ENCODE measurements at regions of chr11 and their contacts with region 1.

Region 1: DNA sequence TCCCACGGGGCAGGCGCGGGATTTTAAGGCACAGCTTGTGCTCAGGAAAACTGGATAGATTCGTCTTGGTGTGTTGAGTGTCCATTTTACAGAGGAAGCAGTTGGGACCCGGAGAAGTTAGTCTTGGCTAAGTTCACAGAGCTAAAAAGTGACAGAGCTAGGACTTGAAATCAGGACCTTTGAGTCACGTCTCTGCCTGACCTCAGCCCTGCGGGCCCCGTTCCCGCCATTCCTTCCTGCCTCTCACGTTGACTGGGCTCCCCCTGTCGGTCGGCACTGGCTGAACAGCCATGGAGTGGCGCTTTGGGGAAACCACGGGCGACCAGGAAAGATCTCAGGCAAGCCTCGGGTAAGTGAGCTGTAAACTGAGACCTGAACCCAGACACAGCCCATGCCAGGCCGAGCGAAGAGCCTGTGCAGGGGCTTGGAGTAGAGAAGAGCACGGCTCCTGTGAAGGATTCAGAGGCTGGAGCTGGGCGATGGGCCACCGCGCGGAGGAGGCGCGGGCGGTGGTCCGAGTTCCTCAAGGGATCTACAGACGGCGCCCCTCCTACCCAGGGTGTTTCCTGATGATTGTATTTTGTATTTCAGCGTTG is 54.1 kb downstream of the WNT11 start:
- DNase-seq: peak; percentile 93
- ATAC-seq: peak; percentile 96
- H3K4me3 ChIP-seq: peak overlapping the region; percentile 41
- H3K27ac ChIP-seq: no peak overlapping the region
- H3K4me1 ChIP-seq: peaks cover 12% of the 10 kb centered on the region
- H3K27me3 ChIP-seq: no peaks in the 10 kb centered on the region
- CTCF ChIP-seq: peak; percentile 92

Region 2: DNA sequence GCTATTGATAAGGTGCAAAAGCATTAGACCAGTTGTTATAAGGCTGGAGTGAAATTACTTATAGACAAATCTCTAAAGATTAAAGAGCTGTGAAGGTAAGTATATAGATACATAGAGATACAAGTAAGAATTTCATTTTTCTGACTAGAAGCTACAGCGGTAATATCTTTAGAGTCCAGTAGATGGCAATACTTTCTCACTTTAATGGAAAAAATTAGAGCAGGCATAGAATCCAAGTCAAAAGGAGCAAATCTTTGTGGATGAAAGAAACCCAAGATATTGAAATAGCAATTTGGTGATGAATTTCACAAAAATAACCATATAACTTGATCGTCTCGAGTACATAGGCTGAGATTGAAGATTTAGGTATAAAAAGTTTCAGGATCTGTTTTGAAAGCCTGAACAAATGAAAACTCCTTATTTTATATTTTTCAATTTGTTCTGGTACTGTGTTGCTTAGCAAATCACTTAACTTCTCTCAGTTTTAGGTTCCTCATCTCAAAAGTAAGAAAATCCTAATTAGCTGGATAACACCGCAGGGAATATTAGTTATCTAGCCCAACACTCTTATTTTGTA is 255.3 kb before region 1 on chr11:
- intact Hi-C with region 1: loop called (anchors 5 kb)
- DNase-seq: no peak
- ATAC-seq: peak; percentile 57
- H3K4me3 ChIP-seq: no peak overlapping the region
- H3K27ac ChIP-seq: no peak overlapping the region
- H3K4me1 ChIP-seq: no peaks in the 10 kb centered on the region
- H3K27me3 ChIP-seq: no peaks in the 10 kb centered on the region
- CTCF ChIP-seq: peak; percentile 76

Region 3: DNA sequence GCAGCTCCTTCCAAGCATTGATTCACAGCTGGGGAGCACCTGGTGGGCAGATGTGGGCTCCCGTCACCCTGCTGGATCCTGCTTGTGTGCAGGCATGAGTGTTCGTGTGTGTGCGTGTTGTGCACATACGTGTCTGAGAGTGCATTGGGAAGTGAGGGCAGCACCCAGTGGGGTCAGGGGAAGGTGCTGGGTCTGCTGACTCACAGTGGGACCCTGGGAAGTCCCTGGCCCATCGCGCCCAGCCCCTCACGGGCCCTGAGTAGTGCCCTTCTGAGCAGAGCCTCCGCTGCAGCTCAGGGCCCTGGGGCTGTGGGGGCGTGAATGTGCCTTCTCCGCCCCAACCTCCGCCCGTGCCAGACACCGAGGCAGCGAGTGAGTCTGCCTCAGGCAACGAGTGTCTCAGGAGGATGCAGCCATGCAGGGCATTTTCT is 17.3 kb after region 1 on chr11:
- intact Hi-C with region 1: no loop called
- DNase-seq: no peak
- ATAC-seq: no peak
- H3K4me3 ChIP-seq: no peak overlapping the region
- H3K27ac ChIP-seq: no peak overlapping the region
- H3K4me1 ChIP-seq: no peaks in the 10 kb centered on the region
- H3K27me3 ChIP-seq: no peaks in the 10 kb centered on the region
- CTCF ChIP-seq: no peak

Measured in upper lobe of right lung (tissue), 1 donor.